ENCODE measurements at regions of chr1 and their contacts with region 1.

Region 1: GRCh38 chr1:150876119-150876454 is 312 bp downstream of the ARNT start:
- DNase-seq: peak in 1 of 9 experiments; percentile 42
- ATAC-seq: peak; percentile 42
- H3K4me3 ChIP-seq: peak overlapping the region; percentile 86 to 97
- H3K4me3 Mint-ChIP-seq: peak overlapping the region; percentile 89
- H3K27ac ChIP-seq: peak overlapping the region; percentile 61 to 76
- H3K27ac Mint-ChIP-seq: peak overlapping the region; percentile 93
- H3K4me1 ChIP-seq: peaks cover 20% of the 10 kb centered on the region
- H3K4me1 Mint-ChIP-seq: peaks cover 29% of the 10 kb centered on the region
- H3K27me3 ChIP-seq: no peaks in the 10 kb centered on the region
- H3K27me3 Mint-ChIP-seq: no peaks in the 10 kb centered on the region
- CTCF ChIP-seq: no peak

Region 2: DNA sequence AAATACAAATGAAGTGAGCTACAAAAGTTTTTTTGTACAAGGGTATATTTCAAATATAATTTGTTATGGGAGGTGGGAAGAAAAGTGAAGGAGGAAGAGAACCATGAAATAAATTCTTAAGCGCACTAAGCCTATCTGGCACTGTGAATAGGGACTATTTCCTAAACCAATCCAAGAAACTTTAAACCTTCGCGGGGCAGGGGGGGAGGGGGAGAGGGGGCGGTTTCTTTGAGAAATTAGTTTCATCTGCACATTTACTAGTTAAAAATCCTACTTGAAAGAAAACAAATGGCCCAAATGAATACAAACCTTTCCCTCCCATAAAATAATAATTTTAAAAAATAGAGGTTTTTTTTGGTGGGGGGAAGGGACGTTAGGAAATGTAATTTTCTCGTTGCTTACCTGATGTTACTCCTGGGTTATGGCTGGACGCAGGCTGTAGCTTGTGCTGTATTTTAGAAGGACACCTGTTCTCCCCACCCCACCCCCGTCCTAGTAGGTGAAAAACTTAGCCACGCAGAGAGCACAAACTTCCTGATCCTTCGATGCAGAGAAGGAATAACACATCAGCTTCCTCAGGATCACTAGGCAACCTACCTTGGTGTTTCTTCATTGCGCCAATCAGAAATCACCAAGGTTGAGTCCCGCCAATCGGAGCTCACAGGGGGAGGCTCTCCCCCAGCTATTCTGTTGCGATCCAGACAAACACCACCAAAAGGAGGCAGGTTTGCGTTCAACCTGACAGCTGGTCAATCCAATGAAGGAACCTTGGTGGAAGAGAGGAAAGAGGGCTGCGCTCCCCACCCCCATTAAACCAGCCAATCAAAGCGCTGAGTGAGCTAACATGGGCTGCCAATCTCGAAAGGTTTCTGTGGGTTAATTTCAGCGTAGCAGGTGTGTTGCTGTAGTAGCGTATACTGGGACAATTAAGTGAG is 179.2 kb before region 1 on chr1 and contains the start of gene GOLPH3L:
- CTCF ChIA-PET with region 1: no interaction called
- POLR2A ChIA-PET with region 1: no interaction called
- intact Hi-C with region 1: loop called (anchors 1 to 2 kb)
- DNase-seq: peak; percentile 76 to 97 (median 88)
- ATAC-seq: peak; percentile 98
- H3K4me3 ChIP-seq: peak within 1 kb of the TSS; percentile 81 to 88
- H3K4me3 Mint-ChIP-seq: peak within 1 kb of the TSS; percentile 98
- H3K27ac ChIP-seq: peak within 1 kb of the TSS; percentile 70 to 81
- H3K27ac Mint-ChIP-seq: peak within 1 kb of the TSS; percentile 92
- H3K4me1 ChIP-seq: peaks cover 7% of the 10 kb centered on the region
- H3K4me1 Mint-ChIP-seq: peaks cover 38% of the 10 kb centered on the region
- H3K27me3 ChIP-seq: no peaks in the 10 kb centered on the region
- H3K27me3 Mint-ChIP-seq: peaks cover 2% of the 10 kb centered on the region
- CTCF ChIP-seq: no peak
- total RNA-seq, gene GOLPH3L: 1.6 to 1.8 TPM

Region 3: GRCh38 chr1:150979092-150980056 is 103.3 kb after region 1 on chr1:
- CTCF ChIA-PET with region 1: no interaction called
- POLR2A ChIA-PET with region 1: no interaction called
- intact Hi-C with region 1: loop called (anchors 1 kb)
- DNase-seq: peak; percentile 83 to 93 (median 90)
- ATAC-seq: peak; percentile 62
- H3K4me3 ChIP-seq: peak overlapping the region; percentile 22 to 32
- H3K4me3 Mint-ChIP-seq: peak overlapping the region; percentile 57
- H3K27ac ChIP-seq: peak overlapping the region in 1 of 2 experiments; percentile 47
- H3K27ac Mint-ChIP-seq: peak overlapping the region; percentile 3
- H3K4me1 ChIP-seq: peaks cover 41% of the 10 kb centered on the region
- H3K4me1 Mint-ChIP-seq: peaks cover 38% of the 10 kb centered on the region
- H3K27me3 ChIP-seq: no peaks in the 10 kb centered on the region
- H3K27me3 Mint-ChIP-seq: no peaks in the 10 kb centered on the region
- CTCF ChIP-seq: peak; percentile 100

Region 4: GRCh38 chr1:150995896-150996295 is 119.8 kb after region 1 on chr1:
- CTCF ChIA-PET with region 1: no interaction called
- POLR2A ChIA-PET with region 1: no interaction called
- intact Hi-C with region 1: no loop called
- DNase-seq: peak in 4 of 9 experiments; percentile 29 to 65 (median 44)
- ATAC-seq: peak; percentile 64
- H3K4me3 ChIP-seq: no peak overlapping the region
- H3K4me3 Mint-ChIP-seq: no peak overlapping the region
- H3K27ac ChIP-seq: no peak overlapping the region
- H3K27ac Mint-ChIP-seq: no peak overlapping the region
- H3K4me1 ChIP-seq: no peaks in the 10 kb centered on the region
- H3K4me1 Mint-ChIP-seq: peaks cover 8% of the 10 kb centered on the region
- H3K27me3 ChIP-seq: no peaks in the 10 kb centered on the region
- H3K27me3 Mint-ChIP-seq: no peaks in the 10 kb centered on the region
- CTCF ChIP-seq: peak; percentile 95

Region 5: GRCh38 chr1:151165738-151166505 is 289.8 kb after region 1 on chr1 and contains the starts of genes LYSMD1 and SCNM1:
- CTCF ChIA-PET with region 1: no interaction called
- POLR2A ChIA-PET with region 1: no interaction called
- intact Hi-C with region 1: loop called in 1 of 2 experiments (anchors 2 kb)
- DNase-seq: peak; percentile 91 to 99 (median 95)
- ATAC-seq: peak; percentile 96
- H3K4me3 ChIP-seq: peak within 1 kb of the TSS; percentile 82 to 94
- H3K4me3 Mint-ChIP-seq: peak within 1 kb of the TSS; percentile 95
- H3K27ac ChIP-seq: peak within 1 kb of the TSS; percentile 72 to 77
- H3K27ac Mint-ChIP-seq: peak within 1 kb of the TSS; percentile 94
- H3K4me1 ChIP-seq: peaks cover 29% of the 10 kb centered on the region
- H3K4me1 Mint-ChIP-seq: peaks cover 50% of the 10 kb centered on the region
- H3K27me3 ChIP-seq: no peaks in the 10 kb centered on the region
- H3K27me3 Mint-ChIP-seq: no peaks in the 10 kb centered on the region
- CTCF ChIP-seq: no peak
- total RNA-seq, gene LYSMD1: 0.49 to 0.94 TPM
- total RNA-seq, gene SCNM1: 35.0 to 40.4 TPM

Region 6: GRCh38 chr1:151790071-151790940 is 914.2 kb after region 1 on chr1 and contains the start of gene TDRKH:
- CTCF ChIA-PET with region 1: no interaction called
- POLR2A ChIA-PET with region 1: no interaction called
- intact Hi-C with region 1: no loop called
- DNase-seq: peak; percentile 95 to 99 (median 97)
- ATAC-seq: peak; percentile 94
- H3K4me3 ChIP-seq: peak within 1 kb of the TSS; percentile 68 to 82
- H3K4me3 Mint-ChIP-seq: peak within 1 kb of the TSS; percentile 98
- H3K27ac ChIP-seq: peak within 1 kb of the TSS; percentile 29 to 37
- H3K27ac Mint-ChIP-seq: peak within 1 kb of the TSS; percentile 89
- H3K4me1 ChIP-seq: peaks cover 12% of the 10 kb centered on the region
- H3K4me1 Mint-ChIP-seq: peaks cover 30% of the 10 kb centered on the region
- H3K27me3 ChIP-seq: no peaks in the 10 kb centered on the region
- H3K27me3 Mint-ChIP-seq: no peaks in the 10 kb centered on the region
- CTCF ChIP-seq: no peak
- total RNA-seq, gene TDRKH: 3.6 to 3.9 TPM